ENCODE measurements at regions of chrX and their contacts with region 1.

Region 1: GRCh38 chrX:48737213-48737938 is 24.2 kb upstream of the GLOD5 start:
- DNase-seq: peak; percentile 77
- ATAC-seq: peak; percentile 98
- H3K4me3 Mint-ChIP-seq: peak overlapping the region; percentile 93
- H3K27ac Mint-ChIP-seq: peak overlapping the region; percentile 95
- H3K4me1 Mint-ChIP-seq: peaks cover 9% of the 10 kb centered on the region
- H3K27me3 Mint-ChIP-seq: no peaks in the 10 kb centered on the region

Region 2: DNA sequence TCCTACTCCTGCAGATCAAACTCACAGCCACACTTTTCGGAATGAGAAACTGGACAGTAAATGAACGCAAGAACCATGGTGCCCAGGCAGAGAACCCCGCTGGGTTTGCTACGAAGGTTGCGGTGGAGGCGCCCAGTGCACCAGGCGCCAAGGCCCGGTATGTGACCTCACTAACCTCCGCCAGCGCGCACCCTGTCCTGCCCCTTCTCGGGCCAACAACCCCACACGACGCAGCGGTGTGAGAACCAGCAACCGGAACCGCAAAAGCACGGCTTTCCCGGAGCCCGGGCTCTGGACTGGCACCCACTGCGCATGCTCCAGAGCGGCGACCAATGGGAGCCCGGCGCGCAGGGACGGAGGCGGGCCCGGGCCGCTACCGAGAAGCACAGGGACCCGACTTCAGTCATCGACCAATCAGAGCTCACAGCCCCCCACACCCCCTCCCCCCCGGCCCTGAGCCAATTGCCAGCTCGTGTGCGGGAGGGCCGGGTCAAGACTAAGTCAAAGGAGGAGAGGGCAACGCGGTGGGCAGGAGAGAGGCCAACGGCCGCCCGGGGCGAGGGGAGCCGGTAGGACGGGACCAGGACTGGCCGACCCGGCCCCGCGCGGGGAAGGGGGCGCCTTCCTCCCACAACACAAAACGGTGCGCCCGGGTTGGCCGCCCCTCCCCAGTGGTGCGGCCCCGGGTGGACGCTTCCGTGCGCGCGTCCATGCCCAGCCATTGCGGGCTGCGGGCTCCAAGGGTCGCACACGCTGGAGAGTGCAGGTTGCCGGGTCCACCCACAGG is 61.1 kb before region 1 on chrX:
- POLR2A ChIA-PET with region 1: interaction called, 14 read pairs
- DNase-seq: peak; percentile 90
- ATAC-seq: peak; percentile 94
- H3K4me3 Mint-ChIP-seq: peak overlapping the region; percentile 93
- H3K27ac Mint-ChIP-seq: peak overlapping the region; percentile 92
- H3K4me1 Mint-ChIP-seq: peaks cover 23% of the 10 kb centered on the region
- H3K27me3 Mint-ChIP-seq: no peaks in the 10 kb centered on the region

Region 3: DNA sequence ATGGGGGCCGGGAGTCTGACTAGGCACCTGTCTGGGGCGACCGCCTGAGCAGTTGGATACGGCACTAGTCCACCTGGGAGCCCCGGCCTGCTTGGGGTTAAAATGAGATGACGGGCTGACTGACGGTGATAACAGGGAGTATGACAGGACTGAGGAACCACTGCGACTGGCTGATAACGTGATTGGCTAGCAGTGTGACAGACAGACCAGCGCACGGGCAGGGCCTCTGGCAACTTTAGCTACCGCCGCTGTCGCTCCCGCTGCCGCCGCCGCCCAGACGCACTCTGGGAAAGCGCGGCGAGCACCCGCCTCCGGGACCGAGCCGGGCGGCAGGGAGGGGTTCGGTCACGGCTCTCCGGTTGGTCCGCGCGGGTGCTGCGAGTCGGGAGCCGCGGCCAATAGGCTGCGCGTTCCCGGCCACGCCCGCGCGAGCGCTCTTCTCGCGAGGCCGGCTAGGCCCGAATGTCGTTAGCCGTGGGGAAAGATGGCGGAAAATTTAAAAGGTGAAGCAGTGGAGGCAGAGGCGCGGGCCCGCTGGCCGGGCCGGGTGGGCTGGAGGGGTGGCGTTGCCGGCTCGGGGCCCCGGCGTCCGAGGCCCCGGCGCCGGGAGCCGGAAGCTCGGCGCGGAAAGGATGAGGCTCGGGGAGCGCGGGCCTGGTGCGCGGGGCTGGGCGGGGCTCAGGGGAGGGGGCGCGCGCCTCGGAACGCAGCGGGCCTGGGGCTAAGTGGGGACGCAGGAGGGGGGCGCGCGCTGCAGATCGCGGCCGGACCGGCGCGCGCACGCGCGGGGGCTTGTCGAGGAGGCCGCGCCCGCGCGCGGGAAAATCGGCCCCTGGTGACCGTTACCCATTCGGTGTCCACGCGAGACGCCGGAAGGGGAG is 40.8 kb before region 1 on chrX and contains the start of gene SUV39H1:
- POLR2A ChIA-PET with region 1: interaction called, 29 read pairs
- DNase-seq: peak; percentile 87
- ATAC-seq: peak; percentile 96
- H3K4me3 Mint-ChIP-seq: peak within 1 kb of the TSS; percentile 96
- H3K27ac Mint-ChIP-seq: peak within 1 kb of the TSS; percentile 98
- H3K4me1 Mint-ChIP-seq: peaks cover 16% of the 10 kb centered on the region
- H3K27me3 Mint-ChIP-seq: no peaks in the 10 kb centered on the region
- total RNA-seq, gene SUV39H1: 25.4 to 26.8 TPM

Region 4: GRCh38 chrX:48715072-48715471 is 22.3 kb before region 1 on chrX:
- POLR2A ChIA-PET with region 1: interaction called, 31 read pairs
- DNase-seq: no peak
- ATAC-seq: no peak
- H3K4me3 Mint-ChIP-seq: peak overlapping the region; percentile 53
- H3K27ac Mint-ChIP-seq: peak overlapping the region; percentile 94
- H3K4me1 Mint-ChIP-seq: peaks cover 53% of the 10 kb centered on the region
- H3K27me3 Mint-ChIP-seq: no peaks in the 10 kb centered on the region

Region 5: GRCh38 chrX:48720577-48721250 is 16.7 kb before region 1 on chrX:
- POLR2A ChIA-PET with region 1: interaction called, 11 read pairs
- DNase-seq: no peak
- ATAC-seq: peak; percentile 50
- H3K4me3 Mint-ChIP-seq: no peak overlapping the region
- H3K27ac Mint-ChIP-seq: no peak overlapping the region
- H3K4me1 Mint-ChIP-seq: peaks cover 9% of the 10 kb centered on the region
- H3K27me3 Mint-ChIP-seq: no peaks in the 10 kb centered on the region

Region 6: DNA sequence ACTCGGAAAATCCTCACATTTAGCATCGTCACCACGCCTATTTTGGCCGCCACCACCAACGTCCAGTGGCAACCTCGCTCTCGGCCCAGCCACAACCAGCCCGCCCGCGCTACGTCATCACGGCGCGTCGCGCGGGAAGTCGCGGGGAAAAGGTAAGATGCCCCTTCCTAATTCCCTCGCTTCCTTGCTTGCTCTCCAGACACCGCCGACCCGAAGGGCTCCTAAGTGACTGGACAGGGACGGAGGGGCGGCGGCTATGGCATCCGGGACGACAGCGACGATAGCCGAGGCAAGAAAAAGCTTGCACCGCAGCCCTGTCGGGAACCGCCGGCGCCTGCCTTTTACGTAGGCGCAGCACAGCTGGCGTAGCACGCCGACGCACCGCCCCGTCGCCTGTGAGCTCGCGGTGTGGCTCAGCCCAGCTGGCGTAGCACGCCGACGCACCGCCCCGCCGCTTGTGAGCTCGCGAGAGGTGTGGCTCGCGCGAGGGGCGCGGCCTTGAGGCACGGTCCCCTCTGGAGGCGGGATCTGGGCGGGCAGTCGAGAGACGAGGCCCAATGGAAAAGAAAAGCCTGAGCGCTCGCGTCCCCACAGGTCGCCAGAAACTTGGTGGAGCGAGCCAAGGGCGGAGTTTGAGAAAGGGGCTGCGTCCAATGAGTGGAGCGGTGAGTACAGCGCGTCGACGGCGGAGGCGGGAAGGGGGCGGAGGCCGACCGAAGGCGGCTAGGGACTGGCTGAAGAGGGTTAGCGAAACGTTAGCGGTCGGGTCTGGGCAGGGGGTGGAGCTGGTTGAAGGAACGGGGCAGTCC is 64.1 kb after region 1 on chrX and contains the start of gene HDAC6:
- POLR2A ChIA-PET with region 1: interaction called, 16 read pairs
- DNase-seq: peak; percentile 92
- ATAC-seq: peak; percentile 90
- H3K4me3 Mint-ChIP-seq: peak within 1 kb of the TSS; percentile 95
- H3K27ac Mint-ChIP-seq: peak within 1 kb of the TSS; percentile 99
- H3K4me1 Mint-ChIP-seq: peaks cover 10% of the 10 kb centered on the region
- H3K27me3 Mint-ChIP-seq: no peaks in the 10 kb centered on the region
- total RNA-seq, gene HDAC6: 107 to 113 TPM

Region 7: DNA sequence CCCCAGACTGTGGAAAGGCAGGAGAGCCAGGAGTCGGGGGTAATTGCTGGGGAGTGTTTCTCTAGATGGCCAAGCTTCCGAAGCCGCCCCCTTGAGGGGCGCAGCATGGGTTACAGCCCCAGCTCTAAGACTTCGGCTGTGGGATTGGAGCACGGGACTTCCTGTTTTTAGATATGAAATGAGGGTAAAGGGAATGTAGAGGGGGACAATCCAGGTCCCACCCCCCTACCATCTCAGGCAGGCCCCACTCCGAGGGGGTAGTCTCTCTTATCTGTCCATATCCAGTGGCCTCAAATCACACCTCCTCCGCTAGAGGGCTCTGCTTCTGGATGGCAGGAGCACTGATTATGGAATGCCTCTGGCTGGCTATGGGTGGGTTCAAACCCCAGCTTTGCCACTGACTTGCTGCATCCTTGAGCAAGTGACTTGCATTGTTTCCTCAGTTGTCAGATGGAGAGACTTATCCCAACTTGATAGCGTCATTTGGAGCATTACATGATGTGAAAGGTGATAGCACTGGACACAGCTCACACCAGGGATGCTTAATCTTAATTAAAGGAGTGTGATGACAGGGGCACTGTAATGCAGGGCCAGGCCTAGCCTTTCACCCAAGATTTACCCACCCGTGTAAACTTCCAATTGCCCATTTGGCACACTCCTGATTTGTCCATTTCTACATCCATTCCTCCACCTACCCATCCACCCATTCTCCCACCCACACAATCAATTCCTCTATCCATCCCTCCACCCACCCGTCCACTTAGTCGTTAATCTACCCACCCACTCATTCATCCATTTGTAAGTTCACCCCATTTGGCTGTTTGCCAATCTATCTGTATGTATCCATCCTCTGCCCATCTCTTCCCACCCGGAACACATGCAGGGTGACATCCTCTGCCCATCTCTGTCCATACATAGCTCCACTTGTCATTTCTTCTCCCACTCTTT is 235.1 kb after region 1 on chrX:
- POLR2A ChIA-PET with region 1: no interaction called
- DNase-seq: no peak
- ATAC-seq: peak; percentile 41
- H3K4me3 Mint-ChIP-seq: no peak overlapping the region
- H3K27ac Mint-ChIP-seq: peak overlapping the region; percentile 19
- H3K4me1 Mint-ChIP-seq: peaks cover 20% of the 10 kb centered on the region
- H3K27me3 Mint-ChIP-seq: no peaks in the 10 kb centered on the region

Region 8: GRCh38 chrX:48989483-48989882 is 252.1 kb after region 1 on chrX:
- POLR2A ChIA-PET with region 1: no interaction called
- DNase-seq: no peak
- ATAC-seq: no peak
- H3K4me3 Mint-ChIP-seq: no peak overlapping the region
- H3K27ac Mint-ChIP-seq: no peak overlapping the region
- H3K4me1 Mint-ChIP-seq: no peaks in the 10 kb centered on the region
- H3K27me3 Mint-ChIP-seq: no peaks in the 10 kb centered on the region

Measured in activated naive CD8-positive, alpha-beta T cell treated with anti-CD3 and anti-CD28 coated beads, Interleukin-2, amount 10 ng/mL, durations not matched to agents 7 days and 5 days (primary cell).